ENCODE measurements at regions of chr17 and their contacts with region 1.

Region 1: GRCh38 chr17:35653619-35654361 is 66.7 kb downstream of the AP2B1 start:
- DNase-seq: no peak
- ATAC-seq: no peak
- H3K4me3 ChIP-seq: no peak overlapping the region
- H3K27ac ChIP-seq: no peak overlapping the region
- H3K4me1 ChIP-seq: no peaks in the 10 kb centered on the region
- H3K27me3 ChIP-seq: no peaks in the 10 kb centered on the region
- CTCF ChIP-seq: no peak
- EP300 ChIP-seq: no peak
- POLR2A ChIP-seq: no peak
- RAD21 ChIP-seq: no peak

Region 2: DNA sequence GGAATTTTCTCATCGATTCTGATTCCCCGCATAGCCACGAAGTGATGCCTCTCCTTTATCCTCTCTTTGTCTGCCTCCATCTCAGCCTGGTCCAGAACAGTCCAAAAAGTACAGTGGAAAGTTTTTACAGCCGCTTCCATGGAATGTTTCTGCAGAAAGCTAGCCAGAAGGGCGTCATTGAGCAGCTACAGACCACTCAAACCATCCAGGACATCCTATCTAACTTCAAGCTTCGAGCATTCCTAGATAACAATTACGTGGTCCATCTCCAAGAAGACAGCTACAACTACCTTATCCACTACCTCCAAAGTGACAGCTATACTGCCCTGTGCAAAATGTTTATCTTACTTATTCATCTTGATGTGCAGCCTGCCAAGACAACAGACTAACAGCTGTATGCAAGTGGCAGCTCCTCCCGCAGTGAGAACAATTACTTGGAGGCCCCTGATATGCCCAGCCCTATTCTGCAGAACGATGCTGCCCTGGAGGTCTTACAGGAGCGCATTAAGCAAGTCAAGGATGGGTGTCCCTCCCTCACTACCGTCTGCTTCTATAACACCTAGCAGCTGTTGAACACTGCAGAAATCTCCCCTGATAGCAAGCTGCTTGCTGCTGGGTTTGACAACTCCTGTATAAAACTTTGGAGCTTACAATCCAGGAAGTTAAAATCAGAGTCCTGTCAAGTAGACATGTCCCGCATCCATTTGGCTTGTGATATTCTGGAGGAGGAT is 155.2 kb before region 1 on chr17:
- CTCF ChIA-PET with region 1: no interaction called
- POLR2A ChIA-PET with region 1: no interaction called
- in situ Hi-C with region 1: no loop called
- intact Hi-C with region 1: no loop called
- DNase-seq: no peak
- ATAC-seq: no peak
- H3K4me3 ChIP-seq: no peak overlapping the region
- H3K27ac ChIP-seq: no peak overlapping the region
- H3K4me1 ChIP-seq: 0 out of 5 replicates have a peak, but pooled peaks cover 0 to 3% of the 10 kb centered on the region in 2 experiments
- H3K27me3 ChIP-seq: peaks cover 41 to 55% of the 10 kb centered on the region in 2 experiments
- CTCF ChIP-seq: no peak
- EP300 ChIP-seq: no peak
- POLR2A ChIP-seq: no peak
- RAD21 ChIP-seq: no peak

Region 3: DNA sequence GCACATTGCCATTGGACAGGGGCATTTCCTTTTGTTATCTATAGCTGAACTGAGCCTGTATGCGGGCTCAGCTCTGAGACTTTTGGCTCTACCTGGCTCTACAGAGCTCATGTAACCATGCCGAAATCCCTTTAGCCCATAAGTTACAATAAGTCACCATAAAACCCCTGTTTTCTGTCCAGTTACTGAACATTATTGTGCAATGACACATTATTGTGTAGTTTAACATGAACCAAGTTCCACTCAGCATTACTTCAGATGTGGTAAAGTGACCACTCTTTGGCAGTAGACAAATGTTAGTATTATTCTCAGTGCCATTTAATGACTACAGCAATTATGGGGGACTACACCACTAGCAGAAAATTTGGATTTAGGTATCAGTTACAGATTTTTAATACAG is 12.3 kb after region 1 on chr17:
- CTCF ChIA-PET with region 1: no interaction called
- POLR2A ChIA-PET with region 1: interaction called, 12 read pairs
- in situ Hi-C with region 1: no loop called
- intact Hi-C with region 1: no loop called
- DNase-seq: no peak
- ATAC-seq: no peak
- H3K4me3 ChIP-seq: no peak overlapping the region
- H3K27ac ChIP-seq: no peak overlapping the region
- H3K4me1 ChIP-seq: no peaks in the 10 kb centered on the region
- H3K27me3 ChIP-seq: no peaks in the 10 kb centered on the region
- CTCF ChIP-seq: no peak
- EP300 ChIP-seq: no peak
- POLR2A ChIP-seq: no peak
- RAD21 ChIP-seq: no peak

Region 4: DNA sequence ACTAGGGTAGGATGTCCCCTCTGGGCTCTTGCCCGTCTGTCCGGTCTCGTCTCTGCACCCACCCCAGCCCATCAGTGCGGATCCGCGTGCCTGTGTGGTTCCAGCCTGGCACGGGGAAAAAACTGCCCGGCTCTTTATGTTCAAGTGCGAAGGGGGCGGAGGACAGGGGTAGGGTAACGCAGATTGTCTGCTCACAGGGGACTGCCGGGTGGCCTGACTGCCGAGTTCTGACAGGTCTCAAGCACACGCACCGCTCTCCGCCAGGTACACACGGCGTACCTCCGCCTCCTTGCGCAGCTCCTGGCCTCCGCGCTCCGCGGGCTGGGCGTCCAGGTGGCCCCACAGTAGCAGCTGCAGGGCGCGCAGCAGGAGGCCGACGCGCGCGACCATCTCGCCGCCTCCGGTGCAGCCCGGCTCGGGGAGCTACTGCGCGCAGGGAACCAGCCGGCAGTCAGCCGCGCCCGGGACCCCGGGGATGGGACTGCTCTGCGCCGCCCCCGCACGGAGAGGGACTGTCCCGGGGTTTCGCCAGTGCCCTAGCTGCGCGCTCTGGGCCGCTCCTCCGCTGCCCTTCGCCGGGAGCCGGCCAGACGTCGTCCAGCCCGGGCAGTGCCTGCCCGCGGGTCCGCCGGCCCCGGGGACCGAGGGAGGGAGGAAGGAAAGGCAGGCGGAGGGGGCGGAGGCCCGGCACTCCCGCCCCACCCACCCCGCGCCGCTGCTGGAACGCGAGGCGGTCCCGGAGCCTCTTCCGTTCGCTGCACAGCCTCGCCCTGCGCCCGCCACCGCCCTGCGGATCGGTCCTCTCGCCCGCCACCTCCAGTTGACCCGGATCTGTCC is 141.4 kb after region 1 on chr17 and contains the start of gene MMP28:
- CTCF ChIA-PET with region 1: no interaction called
- POLR2A ChIA-PET with region 1: no interaction called
- in situ Hi-C with region 1: no loop called
- intact Hi-C with region 1: no loop called
- DNase-seq: peak; percentile 43 to 74 (median 66)
- ATAC-seq: peak; percentile 82
- H3K4me3 ChIP-seq: peak within 1 kb of the TSS; percentile 4; the same call in 1 of the 2 replicates
- H3K27ac ChIP-seq: no peak within 1 kb of the TSS
- H3K4me1 ChIP-seq: peaks cover 0 to 14% of the 10 kb centered on the region in 2 experiments; a peak in 4 of 5 replicates
- H3K27me3 ChIP-seq: peaks cover 48 to 72% of the 10 kb centered on the region in 2 experiments
- CTCF ChIP-seq: no peak
- EP300 ChIP-seq: no peak
- POLR2A ChIP-seq: no peak
- RAD21 ChIP-seq: no peak
- polyA plus RNA-seq, gene MMP28: not detected

Region 5: DNA sequence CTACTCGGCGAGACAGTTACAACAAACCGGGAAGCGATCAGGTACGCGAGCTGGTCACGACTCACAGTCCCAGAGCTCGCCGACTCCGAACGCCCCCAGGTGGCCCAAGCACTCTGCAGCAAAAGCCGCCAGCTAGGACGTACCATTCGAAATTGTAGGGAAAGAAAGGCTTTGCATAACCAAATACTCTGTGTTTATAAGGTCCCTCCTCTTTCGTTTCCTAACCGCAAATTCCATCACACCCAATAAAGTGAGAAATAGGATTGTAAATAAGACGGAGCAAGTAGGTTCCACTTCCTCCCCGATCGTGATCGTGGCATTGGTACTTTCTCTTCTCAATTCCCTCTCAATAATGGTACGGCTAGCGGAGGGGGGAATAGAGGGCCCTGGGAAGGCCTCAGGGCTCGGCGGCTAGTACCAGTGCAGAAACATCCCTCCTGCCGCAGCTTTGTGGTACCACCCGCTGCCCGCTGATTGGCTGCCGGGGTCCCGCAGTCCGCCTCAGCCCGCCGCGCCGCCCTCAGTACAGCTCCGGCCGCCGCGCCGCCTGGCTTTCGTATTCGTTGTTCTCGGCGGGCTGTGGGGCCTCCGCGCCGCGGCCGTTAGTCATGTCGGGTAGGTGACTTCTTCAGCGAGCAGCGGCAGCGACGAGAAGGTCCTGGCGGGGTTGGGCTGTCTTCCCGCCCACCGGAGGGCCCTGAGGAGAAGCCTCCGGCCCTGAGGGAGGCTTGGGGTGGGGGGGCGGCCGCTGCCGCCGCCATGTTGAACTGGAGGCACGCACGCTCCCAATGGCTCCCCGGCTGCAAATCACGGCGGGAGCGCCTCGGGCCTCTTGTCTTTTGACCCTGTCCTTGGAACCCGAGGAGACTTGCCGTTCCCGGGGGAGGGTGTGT is 155.4 kb after region 1 on chr17 and contains the start of gene TAF15:
- CTCF ChIA-PET with region 1: no interaction called
- POLR2A ChIA-PET with region 1: no interaction called
- in situ Hi-C with region 1: no loop called
- intact Hi-C with region 1: no loop called
- DNase-seq: peak; percentile 96 to 98 (median 96)
- ATAC-seq: peak; percentile 95
- H3K4me3 ChIP-seq: peak within 1 kb of the TSS; percentile 87
- H3K27ac ChIP-seq: peak within 1 kb of the TSS; percentile 99
- H3K4me1 ChIP-seq: peaks cover 9 to 19% of the 10 kb centered on the region in 2 experiments; a peak in 4 of 5 replicates
- H3K27me3 ChIP-seq: no peaks in the 10 kb centered on the region
- CTCF ChIP-seq: peak; percentile 86 to 94 (median 89)
- EP300 ChIP-seq: no peak
- POLR2A ChIP-seq: peak; percentile 99
- RAD21 ChIP-seq: peak; percentile 32 to 47; a peak in 3 of 4 replicates
- polyA plus RNA-seq, gene TAF15: 4.1 to 22.7 TPM

Region 6: GRCh38 chr17:36212966-36213365 is 559.2 kb after region 1 on chr17:
- CTCF ChIA-PET with region 1: no interaction called
- POLR2A ChIA-PET with region 1: no interaction called
- in situ Hi-C with region 1: no loop called
- intact Hi-C with region 1: no loop called
- DNase-seq: no peak
- ATAC-seq: no peak
- H3K4me3 ChIP-seq: no peak overlapping the region
- H3K27ac ChIP-seq: no peak overlapping the region
- H3K4me1 ChIP-seq: no peaks in the 10 kb centered on the region
- H3K27me3 ChIP-seq: peaks cover 0 to 11% of the 10 kb centered on the region in 2 experiments; a peak in 3 of 5 replicates
- CTCF ChIP-seq: no peak
- EP300 ChIP-seq: no peak
- POLR2A ChIP-seq: no peak
- RAD21 ChIP-seq: no peak